Lower leg skin (tissue), 4 donors: ENCODE measurements at regions of chr17 and their contacts with region 1.

Region 1: DNA sequence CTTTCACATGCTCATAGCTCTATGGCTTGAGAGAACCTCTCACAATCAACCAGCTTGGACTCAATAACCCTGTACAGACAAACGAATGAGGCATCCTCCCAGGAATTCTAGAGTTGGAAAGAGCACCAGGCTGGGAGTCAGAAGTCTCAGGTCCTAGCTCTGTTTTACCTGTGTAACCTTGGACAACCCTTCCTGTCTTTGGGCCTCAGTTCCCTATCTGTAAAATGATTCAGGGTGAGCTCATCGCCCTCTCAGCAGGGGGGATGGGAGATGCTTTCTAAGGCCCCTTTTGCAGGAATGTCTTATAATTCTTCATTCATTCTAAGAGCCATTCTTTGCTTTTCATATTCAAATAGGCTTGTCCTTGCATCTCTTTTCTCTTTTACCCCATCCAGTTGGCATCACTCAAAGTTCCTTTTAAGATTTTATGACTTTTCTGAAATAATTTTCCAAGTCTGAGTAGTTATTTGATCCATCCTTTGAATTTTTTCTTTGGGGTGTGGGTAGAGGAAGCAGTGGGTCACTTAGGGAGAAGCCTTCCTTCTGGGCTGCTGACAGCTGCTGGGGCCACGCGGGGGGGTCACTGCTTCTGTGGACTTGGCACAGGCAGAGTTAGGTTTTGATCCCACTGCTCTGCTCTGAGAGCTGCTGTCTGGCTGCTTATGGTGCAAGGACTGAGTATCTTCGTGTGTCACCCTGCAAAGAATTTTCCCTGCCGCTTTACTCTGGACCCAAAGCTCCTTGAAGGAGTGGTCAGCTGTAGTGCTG is 102.7 kb downstream of the UTP18 start:
- DNase-seq: no peak
- H3K4me3 ChIP-seq: no peak overlapping the region
- CTCF ChIP-seq: no peak
- POLR2A ChIP-seq: no peak

Region 2: DNA sequence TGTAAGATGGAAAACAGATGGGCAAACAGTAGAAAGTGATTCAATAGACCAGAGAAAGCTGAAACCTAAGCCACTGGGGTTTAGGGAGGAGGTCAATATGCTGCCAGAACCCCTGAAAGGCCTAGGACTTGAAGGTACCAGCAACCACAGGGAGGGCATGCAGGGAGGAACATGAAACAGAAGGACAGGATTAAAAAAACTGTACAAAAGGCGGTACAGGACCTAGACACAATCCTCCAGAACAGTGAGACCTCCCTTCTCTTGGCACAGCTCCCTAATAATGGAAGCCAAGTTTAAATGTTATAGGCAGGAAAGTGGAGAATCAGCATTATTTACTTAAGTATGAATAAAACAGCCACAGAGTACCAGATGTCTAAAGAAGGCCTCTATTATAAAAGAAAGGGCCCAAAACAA is 347.9 kb before region 1 on chr17:
- intact Hi-C with region 1: no loop called
- DNase-seq: no peak
- H3K4me3 ChIP-seq: no peak overlapping the region
- CTCF ChIP-seq: no peak
- POLR2A ChIP-seq: no peak

Region 3: DNA sequence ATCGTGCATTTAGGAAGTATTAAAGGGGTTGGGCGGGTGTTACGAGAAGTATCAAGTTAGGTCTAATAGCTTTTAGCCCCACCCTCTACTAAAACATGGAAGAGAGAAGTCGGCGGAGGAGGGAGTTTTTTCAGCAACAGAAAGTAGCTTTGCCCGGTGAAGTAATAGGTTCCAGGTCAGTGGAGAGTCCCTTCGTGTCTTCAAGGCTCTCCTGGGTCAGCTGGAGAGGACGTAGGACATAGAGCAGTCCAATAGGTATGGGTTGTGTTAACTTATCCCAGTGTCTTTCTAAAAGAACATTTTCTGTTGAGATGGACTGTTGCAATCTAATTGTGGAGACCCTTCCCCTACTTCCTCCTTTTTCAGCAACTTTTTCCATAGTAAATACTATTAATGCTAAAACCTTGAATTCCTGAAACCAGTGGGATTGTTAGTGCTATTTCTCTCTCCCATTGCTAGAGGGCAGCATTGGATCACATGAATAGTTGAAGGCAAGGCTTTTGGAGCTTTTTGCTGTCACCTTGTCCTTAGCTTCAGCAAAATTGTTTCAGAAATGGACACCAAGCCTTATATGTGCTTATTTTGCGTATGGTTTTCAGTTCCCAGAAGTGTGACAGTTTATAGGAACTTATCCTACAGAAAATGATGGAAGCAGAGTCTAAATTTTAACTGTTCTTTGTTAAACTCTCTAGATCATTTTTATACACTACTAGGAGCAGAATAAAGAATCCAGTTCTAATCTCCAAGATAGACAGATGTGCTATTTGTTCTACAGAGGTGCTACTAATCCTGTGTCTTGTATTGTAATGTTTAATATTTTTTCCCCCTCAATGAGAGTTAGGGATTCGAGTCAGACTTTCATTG is 64.3 kb before region 1 on chr17:
- intact Hi-C with region 1: no loop called
- DNase-seq: no peak
- H3K4me3 ChIP-seq: no peak overlapping the region
- CTCF ChIP-seq: no peak
- POLR2A ChIP-seq: no peak

Region 4: DNA sequence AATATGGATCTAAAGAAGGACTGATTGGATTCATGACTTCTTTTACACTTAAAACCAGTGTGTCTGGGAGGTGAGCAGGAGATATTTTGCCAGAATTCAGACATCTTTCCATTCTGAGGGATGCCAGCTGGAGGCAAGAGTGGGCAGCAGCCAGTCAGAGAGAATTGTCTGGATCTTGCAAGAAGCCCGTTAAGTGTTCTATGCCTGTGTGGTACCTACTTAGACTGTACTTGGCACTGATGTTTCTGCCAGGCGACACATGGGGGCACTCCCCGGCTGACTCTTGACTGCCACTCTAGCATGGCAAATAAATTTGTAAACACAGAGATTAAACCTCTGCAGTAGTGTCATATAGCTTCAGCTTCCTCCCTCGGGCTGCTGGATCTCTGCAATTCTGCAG is 145.0 kb after region 1 on chr17:
- intact Hi-C with region 1: loop called (anchors 10 kb)
- DNase-seq: no peak
- H3K4me3 ChIP-seq: no peak overlapping the region
- CTCF ChIP-seq: no peak
- POLR2A ChIP-seq: no peak